SK-N-SH (cell line): ENCODE measurements at regions of chr14 and their contacts with region 1.

Region 1: DNA sequence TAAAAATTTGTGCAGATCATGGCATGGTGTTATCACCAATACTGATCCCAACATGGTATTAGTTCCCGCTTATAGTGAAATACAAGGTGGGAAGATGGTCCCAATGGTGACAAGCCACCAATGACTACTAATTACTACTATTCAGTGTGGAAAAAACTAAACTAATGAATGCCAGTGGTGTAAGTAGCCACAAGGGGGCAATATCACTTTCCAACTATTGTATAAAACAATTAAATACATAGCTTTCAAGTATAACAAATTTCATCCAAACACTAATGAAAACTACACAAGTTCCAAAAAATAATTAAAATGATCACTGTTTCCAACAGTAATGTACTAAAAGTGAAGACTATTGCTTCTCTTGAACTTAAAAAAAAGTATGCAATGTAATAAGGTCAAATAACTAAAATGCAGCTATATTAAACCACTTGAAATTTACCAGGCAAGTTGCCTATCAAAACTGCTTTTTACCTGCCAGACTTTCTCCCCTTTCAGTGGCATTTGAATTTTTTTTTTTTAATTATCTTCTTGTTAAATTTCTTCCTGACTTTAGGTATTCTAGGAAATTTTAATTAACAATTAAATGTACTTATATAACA is 58.0 kb downstream of the PAPLN start:
- DNase-seq: peak; percentile 58
- H3K4me3 ChIP-seq: no peak overlapping the region; a peak in 1 of 4 replicates
- H3K27ac ChIP-seq: no peak overlapping the region
- H3K4me1 ChIP-seq: no peaks in the 10 kb centered on the region
- H3K27me3 ChIP-seq: no peaks in the 10 kb centered on the region
- CTCF ChIP-seq: peak; percentile 95
- EP300 ChIP-seq: no peak
- RAD21 ChIP-seq: peak; percentile 70

Region 2: GRCh38 chr14:73250781-73251602 is 44.3 kb before region 1 on chr14:
- CTCF ChIA-PET with region 1: no interaction called
- POLR2A ChIA-PET with region 1: no interaction called
- DNase-seq: no peak
- H3K4me3 ChIP-seq: no peak overlapping the region
- H3K27ac ChIP-seq: no peak overlapping the region
- H3K4me1 ChIP-seq: no peaks in the 10 kb centered on the region
- H3K27me3 ChIP-seq: no peaks in the 10 kb centered on the region
- CTCF ChIP-seq: no peak
- EP300 ChIP-seq: no peak
- RAD21 ChIP-seq: no peak

Region 3: GRCh38 chr14:73264080-73264884 is 31.0 kb before region 1 on chr14:
- CTCF ChIA-PET with region 1: interaction called, 21 read pairs
- POLR2A ChIA-PET with region 1: interaction called, 3 read pairs
- DNase-seq: peak; percentile 40
- H3K4me3 ChIP-seq: no peak overlapping the region
- H3K27ac ChIP-seq: no peak overlapping the region
- H3K4me1 ChIP-seq: peaks cover 0 to 6% of the 10 kb centered on the region in 2 experiments; a peak in 1 of 4 replicates
- H3K27me3 ChIP-seq: no peaks in the 10 kb centered on the region
- CTCF ChIP-seq: no peak
- EP300 ChIP-seq: no peak
- RAD21 ChIP-seq: no peak

Region 4: GRCh38 chr14:73283608-73284379 is 11.5 kb before region 1 on chr14:
- CTCF ChIA-PET with region 1: interaction called, 19 read pairs
- POLR2A ChIA-PET with region 1: no interaction called
- DNase-seq: no peak
- H3K4me3 ChIP-seq: no peak overlapping the region
- H3K27ac ChIP-seq: no peak overlapping the region
- H3K4me1 ChIP-seq: no peaks in the 10 kb centered on the region
- H3K27me3 ChIP-seq: no peaks in the 10 kb centered on the region
- CTCF ChIP-seq: 0 out of 2 replicates have a peak, but pooled peaks have one; percentile 17
- EP300 ChIP-seq: no peak
- RAD21 ChIP-seq: peak; percentile 50

Region 5: DNA sequence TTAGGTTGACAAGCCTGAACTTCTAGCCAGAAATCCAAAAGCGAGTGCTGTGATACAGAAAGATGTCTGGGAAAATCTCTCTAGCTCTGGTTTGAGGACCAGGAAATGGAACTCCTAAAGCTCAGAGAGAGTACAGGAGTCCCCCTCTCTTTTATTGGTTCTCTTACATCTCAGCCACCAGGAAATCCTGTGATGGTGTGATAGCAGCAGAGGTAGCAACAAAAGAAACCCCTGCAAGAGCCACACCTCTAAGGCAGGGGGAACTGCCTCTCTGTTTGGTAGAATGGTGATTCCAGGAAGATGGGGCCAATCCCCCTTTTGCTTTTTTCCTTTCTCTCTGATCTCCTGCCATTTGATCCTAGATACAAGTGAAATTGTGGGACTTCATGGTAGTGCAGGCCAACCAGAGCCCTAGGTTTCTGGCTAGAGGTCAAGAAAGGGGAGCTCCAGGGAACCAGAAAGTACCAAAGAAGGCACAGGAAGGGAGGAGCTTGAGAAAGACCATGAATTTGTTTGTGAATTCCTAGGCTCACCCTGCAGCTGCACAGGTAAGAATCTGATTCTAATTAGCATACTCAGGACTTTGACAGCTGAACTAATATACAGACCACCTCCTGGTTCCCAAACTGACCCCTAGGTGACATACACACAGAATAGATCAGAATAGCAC is 30.5 kb after region 1 on chr14:
- CTCF ChIA-PET with region 1: interaction called, 18 read pairs
- POLR2A ChIA-PET with region 1: no interaction called
- DNase-seq: no peak
- H3K4me3 ChIP-seq: no peak overlapping the region
- H3K27ac ChIP-seq: no peak overlapping the region
- H3K4me1 ChIP-seq: peaks cover 0 to 8% of the 10 kb centered on the region in 2 experiments; a peak in 1 of 4 replicates
- H3K27me3 ChIP-seq: no peaks in the 10 kb centered on the region
- CTCF ChIP-seq: no peak
- EP300 ChIP-seq: no peak
- RAD21 ChIP-seq: no peak

Region 6: DNA sequence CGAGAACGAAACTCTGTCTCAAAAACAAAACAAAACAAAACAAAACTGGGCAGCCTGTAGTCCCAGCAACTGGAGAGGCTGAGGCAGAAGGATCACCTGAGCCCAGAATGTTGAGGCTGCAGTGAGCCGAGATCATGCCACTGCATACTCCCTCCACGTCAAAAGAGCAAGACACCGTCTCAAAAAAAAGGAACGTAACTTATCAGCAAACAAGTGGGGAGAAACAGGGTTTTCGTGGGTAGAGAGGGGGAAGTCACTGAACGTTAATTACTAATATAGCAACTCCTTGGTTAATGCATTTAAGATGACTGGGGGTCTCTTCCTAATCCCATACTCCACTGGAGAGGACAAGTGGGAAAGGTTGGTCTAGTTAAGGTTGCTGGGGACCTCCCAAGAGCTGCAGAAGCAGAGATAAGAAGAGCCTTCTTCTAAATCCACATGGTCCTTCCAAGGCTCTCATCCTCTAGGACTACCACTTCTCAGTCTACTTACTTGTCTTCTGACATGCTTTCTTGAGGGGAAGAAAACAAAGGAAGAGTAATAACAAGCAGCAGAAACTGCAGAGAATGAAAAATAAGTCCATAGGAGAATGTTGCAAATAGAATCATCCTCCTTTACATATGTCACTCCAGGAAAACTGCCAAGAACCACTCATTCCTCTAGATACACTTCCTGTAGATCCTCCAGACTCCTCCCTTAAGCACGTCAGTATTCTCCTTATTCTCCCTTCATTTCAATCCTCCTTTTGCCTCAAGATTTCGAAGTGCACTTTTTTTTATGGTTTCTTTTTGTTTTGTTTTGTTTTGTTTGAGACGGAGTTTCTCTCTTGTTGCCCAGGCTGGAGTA is 157.3 kb after region 1 on chr14:
- CTCF ChIA-PET with region 1: interaction called, 13 read pairs
- POLR2A ChIA-PET with region 1: no interaction called
- DNase-seq: no peak
- H3K4me3 ChIP-seq: no peak overlapping the region
- H3K27ac ChIP-seq: peak overlapping the region in 1 of 2 experiments; percentile 70; a peak in 2 of 4 replicates
- H3K4me1 ChIP-seq: peaks cover 6 to 33% of the 10 kb centered on the region in 2 experiments; a peak in 3 of 4 replicates
- H3K27me3 ChIP-seq: no peaks in the 10 kb centered on the region
- CTCF ChIP-seq: no peak
- EP300 ChIP-seq: no peak
- RAD21 ChIP-seq: no peak

Region 7: DNA sequence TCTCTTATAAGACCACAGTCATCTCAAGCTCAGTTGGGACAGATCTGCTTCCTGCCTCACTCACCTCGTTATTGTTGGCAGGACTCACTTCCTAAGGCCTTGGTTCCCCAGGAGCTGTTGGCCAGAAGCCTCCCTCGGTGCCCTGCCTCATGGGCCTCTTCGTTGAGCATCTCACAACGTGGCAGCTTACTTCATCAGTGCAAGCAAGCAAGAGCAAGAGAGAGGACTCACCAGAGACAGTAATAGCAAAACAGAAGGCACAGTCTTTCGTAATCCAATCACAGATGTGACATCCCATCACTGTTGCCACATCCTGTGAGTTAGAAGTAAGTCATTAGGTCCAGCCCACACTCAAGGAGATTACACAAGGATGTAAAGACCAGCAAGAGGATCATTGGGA is 168.1 kb after region 1 on chr14:
- CTCF ChIA-PET with region 1: interaction called, 179 read pairs
- POLR2A ChIA-PET with region 1: interaction called, 11 read pairs
- DNase-seq: no peak
- H3K4me3 ChIP-seq: peak overlapping the region in 1 of 2 experiments; percentile 41; a peak in 2 of 4 replicates
- H3K27ac ChIP-seq: peak overlapping the region; percentile 78 to 99
- H3K4me1 ChIP-seq: peaks cover 32 to 49% of the 10 kb centered on the region in 2 experiments
- H3K27me3 ChIP-seq: no peaks in the 10 kb centered on the region
- CTCF ChIP-seq: no peak
- EP300 ChIP-seq: no peak
- RAD21 ChIP-seq: no peak

Region 8: GRCh38 chr14:73640796-73641365 is 345.6 kb after region 1 on chr14:
- CTCF ChIA-PET with region 1: no interaction called
- POLR2A ChIA-PET with region 1: no interaction called
- DNase-seq: no peak
- H3K4me3 ChIP-seq: no peak overlapping the region
- H3K27ac ChIP-seq: no peak overlapping the region
- H3K4me1 ChIP-seq: peaks cover 0 to 11% of the 10 kb centered on the region in 2 experiments; a peak in 1 of 4 replicates
- H3K27me3 ChIP-seq: no peaks in the 10 kb centered on the region
- CTCF ChIP-seq: no peak
- EP300 ChIP-seq: no peak
- RAD21 ChIP-seq: no peak